PC-3 (cell line): ENCODE measurements at regions of chr19 and their contacts with region 1.

Region 1: DNA sequence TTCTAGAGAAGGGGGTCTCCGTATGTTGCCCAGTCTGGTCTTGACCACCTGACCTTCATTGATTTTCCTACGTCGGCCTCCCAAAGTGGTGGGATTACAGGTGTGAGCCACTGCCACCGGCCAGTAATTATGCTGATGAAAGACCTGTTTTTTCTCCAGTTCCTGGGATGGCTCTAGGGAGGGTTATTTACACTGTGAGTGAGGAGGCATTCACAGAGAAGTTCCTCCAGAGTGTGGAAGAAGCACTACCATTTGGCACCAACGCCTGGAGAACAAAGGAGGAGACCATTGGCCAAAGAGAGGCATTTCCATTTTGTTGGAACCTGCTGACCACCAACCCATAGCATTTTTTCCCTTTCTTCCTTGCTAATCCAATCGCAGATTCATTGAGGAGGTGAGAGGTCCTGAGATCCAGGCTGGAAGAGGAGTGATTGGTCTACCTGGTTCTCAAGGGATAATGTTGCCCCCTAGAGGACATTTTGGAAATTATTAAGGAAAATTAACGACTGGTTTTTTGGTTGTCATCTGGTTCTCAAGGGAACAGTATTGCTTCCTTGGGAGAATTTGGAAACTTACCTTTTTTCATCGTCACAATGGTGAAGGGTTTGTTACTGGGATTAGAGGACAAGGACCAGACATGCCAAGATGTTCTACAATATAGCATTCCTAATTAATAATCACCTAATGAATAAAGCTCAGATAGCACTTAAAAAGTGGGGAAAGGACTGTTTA is 5.5 kb upstream of the SAE1 start:
- DNase-seq: peak; percentile 86
- ATAC-seq: peak; percentile 77
- H3K4me3 ChIP-seq: no peak overlapping the region
- H3K27ac ChIP-seq: no peak overlapping the region
- H3K4me1 ChIP-seq: peaks cover 18% of the 10 kb centered on the region
- H3K27me3 ChIP-seq: no peaks in the 10 kb centered on the region
- CTCF ChIP-seq: peak; percentile 71

Region 2: DNA sequence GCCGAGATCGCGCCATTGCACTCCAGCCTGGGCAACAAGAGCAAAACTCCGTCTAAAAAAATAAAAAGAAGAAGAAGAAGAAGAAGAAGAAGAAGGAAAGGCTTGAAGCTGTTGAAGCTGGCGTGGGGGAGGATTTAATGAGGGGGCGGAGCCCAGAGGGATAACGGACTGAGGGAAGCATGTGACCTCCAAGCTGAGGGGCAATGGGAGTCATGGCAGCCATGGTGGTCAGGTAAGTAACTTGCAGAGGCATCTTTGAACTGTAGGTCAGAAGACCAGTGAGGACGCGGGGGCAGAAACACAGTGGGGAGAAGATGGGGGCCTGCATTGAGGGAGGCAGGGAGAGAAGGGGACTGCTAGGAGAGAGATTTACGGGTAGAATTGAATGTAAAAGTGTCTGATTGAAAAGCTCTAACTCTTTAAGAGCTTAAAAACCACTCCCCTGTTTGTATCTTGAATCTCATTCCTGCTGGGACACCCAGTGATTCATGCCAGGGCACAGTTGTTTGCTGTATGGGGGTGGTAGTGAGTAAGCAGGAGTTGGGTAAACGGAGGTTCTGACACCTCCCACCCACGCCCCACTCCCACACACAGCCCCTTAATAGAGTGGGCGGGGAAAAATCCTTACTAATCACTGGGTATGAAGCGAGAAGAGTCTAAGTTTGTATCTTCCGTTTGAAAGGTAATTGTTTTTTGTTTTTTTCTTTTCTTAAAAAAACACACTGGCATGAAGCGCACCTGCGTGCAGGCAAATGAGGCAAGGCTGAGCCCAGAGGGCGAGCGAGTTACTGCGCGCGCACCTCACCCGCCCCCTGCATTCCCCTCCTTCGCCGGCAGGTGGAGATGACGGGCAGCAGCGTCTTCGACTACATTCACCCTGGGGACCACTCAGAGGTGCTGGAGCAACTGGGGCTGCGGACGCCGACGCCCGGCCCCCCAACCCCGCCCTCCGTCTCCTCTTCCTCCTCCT is 89.7 kb before region 1 on chr19:
- CTCF ChIA-PET with region 1: interaction called, 3 read pairs
- POLR2A ChIA-PET with region 1: no interaction called
- intact Hi-C with region 1: loop called (anchors 5 kb)
- DNase-seq: peak; percentile 86
- ATAC-seq: peak; percentile 90
- H3K4me3 ChIP-seq: peak overlapping the region; percentile 67
- H3K27ac ChIP-seq: peak overlapping the region; percentile 84
- H3K4me1 ChIP-seq: peaks cover 7% of the 10 kb centered on the region; the same call in 1 of the 2 replicates
- H3K27me3 ChIP-seq: no peaks in the 10 kb centered on the region
- CTCF ChIP-seq: peak; percentile 72

Region 3: GRCh38 chr19:47075179-47075810 is 49.8 kb before region 1 on chr19:
- CTCF ChIA-PET with region 1: interaction called, 3 read pairs
- POLR2A ChIA-PET with region 1: no interaction called
- intact Hi-C with region 1: loop called (anchors 1 kb)
- DNase-seq: no peak
- ATAC-seq: no peak
- H3K4me3 ChIP-seq: no peak overlapping the region
- H3K27ac ChIP-seq: no peak overlapping the region
- H3K4me1 ChIP-seq: peaks cover 5% of the 10 kb centered on the region; the same call in 1 of the 2 replicates
- H3K27me3 ChIP-seq: no peaks in the 10 kb centered on the region
- CTCF ChIP-seq: no peak

Region 4: DNA sequence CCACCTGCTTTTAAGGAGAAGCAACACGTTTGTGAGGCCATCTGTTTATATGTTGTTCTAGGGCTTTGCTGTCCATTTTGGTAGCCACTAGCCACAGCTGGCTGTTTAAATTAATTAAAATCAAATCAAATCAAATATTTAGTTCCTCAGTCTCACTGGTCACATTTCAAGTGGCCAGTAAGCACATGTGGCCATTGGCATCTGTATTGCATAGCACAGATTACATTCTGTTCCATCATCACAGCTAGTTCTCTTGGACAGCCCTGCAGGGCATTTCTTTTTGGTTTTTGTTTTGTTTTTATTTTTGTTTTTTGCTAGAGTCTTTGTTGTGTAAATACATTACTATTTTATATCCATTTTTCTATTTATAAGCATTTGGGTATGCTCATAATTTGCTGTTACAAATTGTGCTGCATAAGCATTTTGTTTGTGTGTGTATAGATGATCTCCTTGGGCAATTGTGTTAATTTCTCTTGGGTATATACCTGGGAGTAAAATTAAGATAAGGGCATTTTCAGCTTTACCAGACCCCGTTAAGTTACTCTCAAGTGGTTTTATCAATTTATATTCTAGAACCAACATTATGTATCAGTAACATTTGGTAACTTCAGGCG is 36.9 kb after region 1 on chr19:
- CTCF ChIA-PET with region 1: no interaction called
- POLR2A ChIA-PET with region 1: no interaction called
- intact Hi-C with region 1: no loop called
- DNase-seq: no peak
- ATAC-seq: no peak
- H3K4me3 ChIP-seq: no peak overlapping the region
- H3K27ac ChIP-seq: no peak overlapping the region
- H3K4me1 ChIP-seq: peaks cover 13% of the 10 kb centered on the region
- H3K27me3 ChIP-seq: no peaks in the 10 kb centered on the region
- CTCF ChIP-seq: no peak

Region 5: GRCh38 chr19:47186446-47187334 is 61.6 kb after region 1 on chr19:
- CTCF ChIA-PET with region 1: no interaction called
- POLR2A ChIA-PET with region 1: no interaction called
- intact Hi-C with region 1: no loop called
- DNase-seq: no peak
- ATAC-seq: no peak
- H3K4me3 ChIP-seq: no peak overlapping the region
- H3K27ac ChIP-seq: no peak overlapping the region
- H3K4me1 ChIP-seq: peaks cover 18% of the 10 kb centered on the region
- H3K27me3 ChIP-seq: no peaks in the 10 kb centered on the region
- CTCF ChIP-seq: no peak

Region 6: GRCh38 chr19:47391510-47392223 is 266.6 kb after region 1 on chr19:
- CTCF ChIA-PET with region 1: no interaction called
- POLR2A ChIA-PET with region 1: no interaction called
- intact Hi-C with region 1: no loop called
- DNase-seq: peak; percentile 72
- ATAC-seq: peak; percentile 85
- H3K4me3 ChIP-seq: no peak overlapping the region
- H3K27ac ChIP-seq: no peak overlapping the region
- H3K4me1 ChIP-seq: no peaks in the 10 kb centered on the region
- H3K27me3 ChIP-seq: no peaks in the 10 kb centered on the region
- CTCF ChIP-seq: peak; percentile 80